Mammary epithelial cell (primary cell): ENCODE measurements at regions of chr4 and their contacts with region 1.

Region 1: GRCh38 chr4:73869130-73870050 is at the start of gene CXCL1:
- DNase-seq: peak; percentile 66
- H3K4me3 ChIP-seq: peak within 1 kb of the TSS; percentile 57 to 66 (median 59)
- H3K27ac ChIP-seq: peak within 1 kb of the TSS; percentile 65
- H3K4me1 ChIP-seq: peaks cover 27% of the 10 kb centered on the region
- H3K27me3 ChIP-seq: no peaks in the 10 kb centered on the region
- CTCF ChIP-seq: peak in 1 of 2 donors; percentile 4
- total RNA-seq, gene CXCL1: 11.7 to 43.3 TPM

Region 2: DNA sequence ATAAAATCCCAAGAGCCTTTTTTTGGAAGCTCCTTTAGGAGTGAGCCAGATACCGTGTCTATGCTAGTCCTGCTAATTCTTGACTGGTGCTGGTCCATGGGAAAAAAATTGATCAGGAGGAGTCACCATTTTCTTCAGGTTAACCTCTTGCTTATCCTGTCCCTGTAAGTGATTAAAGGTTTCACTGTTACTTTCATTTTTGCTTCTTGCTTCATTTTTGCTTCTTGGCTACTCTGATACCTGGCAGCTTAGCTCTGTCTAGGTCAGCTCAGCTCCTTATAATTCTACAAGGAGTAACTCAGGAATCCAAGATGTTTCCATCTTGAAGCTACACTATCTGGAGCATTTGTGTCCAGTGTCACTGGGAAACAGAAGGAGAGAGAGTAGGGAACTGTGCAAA is 342.2 kb before region 1 on chr4:
- CTCF ChIA-PET with region 1: no interaction called
- dilution Hi-C with region 1: no loop called
- in situ Hi-C with region 1: no loop called
- intact Hi-C with region 1: no loop called
- DNase-seq: no peak
- H3K4me3 ChIP-seq: no peak overlapping the region
- H3K27ac ChIP-seq: no peak overlapping the region
- H3K4me1 ChIP-seq: no peaks in the 10 kb centered on the region
- H3K27me3 ChIP-seq: no peaks in the 10 kb centered on the region
- CTCF ChIP-seq: no peak

Region 3: DNA sequence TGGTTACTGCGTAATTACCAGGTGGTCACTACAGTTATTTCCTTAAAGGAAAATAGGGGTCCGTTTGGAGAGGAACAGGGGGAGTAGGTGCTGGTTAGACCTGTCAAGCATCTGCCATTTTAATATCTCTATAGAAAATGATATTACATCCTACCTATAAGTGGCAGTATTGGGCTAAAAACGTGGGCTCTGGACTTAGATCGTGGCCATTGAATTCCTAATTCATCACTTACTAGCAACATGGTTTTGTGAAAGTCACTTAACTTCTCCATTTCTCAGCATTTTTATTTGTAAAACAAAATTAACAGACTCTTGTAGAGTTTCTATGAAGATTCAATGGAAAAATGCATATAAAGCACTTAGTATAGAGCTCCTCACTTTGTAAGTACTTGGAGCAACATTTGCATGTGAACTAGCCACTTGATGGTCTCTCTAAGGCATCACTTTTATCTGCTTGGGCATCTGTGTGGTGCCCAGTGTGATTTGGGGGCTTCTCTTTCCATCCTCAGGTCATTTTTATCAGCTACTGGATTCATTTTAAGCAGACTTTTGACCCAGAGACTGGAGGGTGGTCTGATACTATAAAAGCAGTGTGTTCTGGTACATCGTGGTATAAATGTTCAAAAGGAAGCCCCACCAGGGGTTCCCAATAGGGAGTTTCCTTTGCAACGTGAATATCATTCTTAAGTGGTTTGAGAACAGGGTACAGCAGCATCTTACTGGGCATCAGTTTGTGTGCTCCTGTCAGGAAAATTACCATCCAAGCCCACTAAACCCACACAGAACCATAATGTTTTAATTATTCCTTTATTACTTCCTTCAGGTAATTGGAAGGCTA is 206.5 kb before region 1 on chr4:
- CTCF ChIA-PET with region 1: interaction called, 22 read pairs
- dilution Hi-C with region 1: no loop called
- in situ Hi-C with region 1: loop called in 1 of 2 experiments (anchors 10 kb)
- intact Hi-C with region 1: loop called (anchors 1 kb)
- DNase-seq: peak; percentile 64
- H3K4me3 ChIP-seq: no peak overlapping the region
- H3K27ac ChIP-seq: peak overlapping the region; percentile 74
- H3K4me1 ChIP-seq: peaks cover 19% of the 10 kb centered on the region
- H3K27me3 ChIP-seq: no peaks in the 10 kb centered on the region
- CTCF ChIP-seq: peak; percentile 48 to 59

Region 4: GRCh38 chr4:73904491-73904890 is 35.1 kb after region 1 on chr4:
- CTCF ChIA-PET with region 1: no interaction called
- dilution Hi-C with region 1: no loop called
- in situ Hi-C with region 1: no loop called
- intact Hi-C with region 1: loop called (anchors 1 kb)
- DNase-seq: no peak
- H3K4me3 ChIP-seq: no peak overlapping the region
- H3K27ac ChIP-seq: no peak overlapping the region
- H3K4me1 ChIP-seq: peaks cover 20% of the 10 kb centered on the region
- H3K27me3 ChIP-seq: no peaks in the 10 kb centered on the region
- CTCF ChIP-seq: no peak

Region 5: GRCh38 chr4:73922766-73923630 is 53.6 kb after region 1 on chr4:
- CTCF ChIA-PET with region 1: no interaction called
- dilution Hi-C with region 1: loop called (anchors 5 kb)
- in situ Hi-C with region 1: loop called in 1 of 2 experiments (anchors 5 kb)
- intact Hi-C with region 1: loop called (anchors 1 kb)
- DNase-seq: peak; percentile 33
- H3K4me3 ChIP-seq: no peak overlapping the region
- H3K27ac ChIP-seq: peak overlapping the region; percentile 3
- H3K4me1 ChIP-seq: peaks cover 10% of the 10 kb centered on the region
- H3K27me3 ChIP-seq: no peaks in the 10 kb centered on the region
- CTCF ChIP-seq: peak; percentile 35 to 53

Region 6: DNA sequence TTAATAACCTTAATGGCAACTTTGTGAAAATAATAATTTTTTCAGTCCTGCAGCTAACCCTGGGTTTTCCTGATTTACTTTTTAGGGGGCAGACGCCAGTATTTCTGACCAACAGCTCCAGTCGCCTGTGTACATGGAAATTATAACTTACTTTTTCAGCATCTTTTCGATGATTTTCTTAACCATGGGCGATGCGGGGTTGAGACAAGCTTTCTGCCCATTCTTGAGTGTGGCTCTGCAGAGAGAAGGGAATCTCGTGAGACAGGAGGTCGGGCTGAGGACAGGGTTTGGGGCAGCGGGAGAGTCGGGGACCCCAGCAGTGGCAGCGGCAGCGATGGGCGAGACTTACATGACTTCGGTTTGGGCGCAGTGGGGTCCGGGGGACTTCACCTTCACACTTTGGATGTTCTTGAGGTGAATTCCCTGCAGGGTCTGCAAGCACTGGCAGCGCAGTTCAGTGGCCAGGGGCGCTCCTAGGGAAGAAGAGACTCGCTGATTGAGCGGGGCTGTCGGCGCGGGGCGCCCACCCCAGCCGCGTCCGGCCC is 229.1 kb after region 1 on chr4:
- CTCF ChIA-PET with region 1: interaction called, 4 read pairs
- dilution Hi-C with region 1: no loop called
- in situ Hi-C with region 1: no loop called
- intact Hi-C with region 1: loop called (anchors 1 kb)
- DNase-seq: no peak
- H3K4me3 ChIP-seq: peak overlapping the region; percentile 71 to 88 (median 85)
- H3K27ac ChIP-seq: peak overlapping the region; percentile 94
- H3K4me1 ChIP-seq: peaks cover 17% of the 10 kb centered on the region
- H3K27me3 ChIP-seq: no peaks in the 10 kb centered on the region
- CTCF ChIP-seq: no peak

Region 7: DNA sequence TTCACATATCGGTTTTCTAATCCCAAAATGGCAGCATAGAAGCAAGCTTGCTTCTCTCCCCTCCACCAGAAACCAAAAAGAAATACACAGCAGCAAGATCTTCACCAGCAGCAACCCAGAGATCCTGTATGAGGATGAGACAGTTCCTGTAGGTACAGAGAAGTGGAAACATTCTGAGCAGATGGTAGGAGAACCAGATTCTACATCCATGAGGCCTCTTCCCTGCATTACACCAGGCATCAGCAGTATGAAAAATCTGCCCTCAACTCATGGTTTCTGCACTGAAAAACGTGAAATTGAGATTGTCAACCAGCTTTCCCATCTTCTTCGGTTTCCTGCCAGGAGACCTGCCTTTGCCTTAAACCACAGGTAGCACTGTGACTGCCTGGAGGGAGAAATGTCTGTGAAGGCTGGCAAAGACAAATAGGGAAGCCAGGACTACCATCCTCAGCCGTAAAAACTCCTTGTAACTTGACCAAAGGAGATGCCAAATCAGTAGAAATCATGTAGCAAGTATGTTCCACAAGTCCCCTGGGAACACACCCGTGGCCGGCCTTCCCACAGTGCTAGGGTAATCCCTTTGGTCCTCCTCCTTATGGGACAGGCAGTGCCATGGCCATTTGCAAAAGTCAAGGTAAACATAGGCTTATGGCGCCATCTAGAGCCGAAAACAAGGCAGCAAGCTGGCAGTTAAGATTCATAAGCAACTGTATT is 264.6 kb after region 1 on chr4:
- CTCF ChIA-PET with region 1: interaction called, 4 read pairs
- dilution Hi-C with region 1: no loop called
- in situ Hi-C with region 1: no loop called
- intact Hi-C with region 1: loop called (anchors 1 kb)
- DNase-seq: peak; percentile 76
- H3K4me3 ChIP-seq: no peak overlapping the region
- H3K27ac ChIP-seq: peak overlapping the region; percentile 30
- H3K4me1 ChIP-seq: peaks cover 7% of the 10 kb centered on the region
- H3K27me3 ChIP-seq: no peaks in the 10 kb centered on the region
- CTCF ChIP-seq: peak; percentile 83 to 89

Region 8: GRCh38 chr4:74682567-74683359 is 813.4 kb after region 1 on chr4:
- CTCF ChIA-PET with region 1: no interaction called
- dilution Hi-C with region 1: no loop called
- in situ Hi-C with region 1: no loop called
- intact Hi-C with region 1: loop called (anchors 5 kb)
- DNase-seq: peak; percentile 96
- H3K4me3 ChIP-seq: no peak overlapping the region
- H3K27ac ChIP-seq: peak overlapping the region; percentile 54
- H3K4me1 ChIP-seq: peaks cover 15% of the 10 kb centered on the region
- H3K27me3 ChIP-seq: no peaks in the 10 kb centered on the region
- CTCF ChIP-seq: no peak